ENCODE measurements at regions of chr18 and their contacts with region 1.

Region 1: DNA sequence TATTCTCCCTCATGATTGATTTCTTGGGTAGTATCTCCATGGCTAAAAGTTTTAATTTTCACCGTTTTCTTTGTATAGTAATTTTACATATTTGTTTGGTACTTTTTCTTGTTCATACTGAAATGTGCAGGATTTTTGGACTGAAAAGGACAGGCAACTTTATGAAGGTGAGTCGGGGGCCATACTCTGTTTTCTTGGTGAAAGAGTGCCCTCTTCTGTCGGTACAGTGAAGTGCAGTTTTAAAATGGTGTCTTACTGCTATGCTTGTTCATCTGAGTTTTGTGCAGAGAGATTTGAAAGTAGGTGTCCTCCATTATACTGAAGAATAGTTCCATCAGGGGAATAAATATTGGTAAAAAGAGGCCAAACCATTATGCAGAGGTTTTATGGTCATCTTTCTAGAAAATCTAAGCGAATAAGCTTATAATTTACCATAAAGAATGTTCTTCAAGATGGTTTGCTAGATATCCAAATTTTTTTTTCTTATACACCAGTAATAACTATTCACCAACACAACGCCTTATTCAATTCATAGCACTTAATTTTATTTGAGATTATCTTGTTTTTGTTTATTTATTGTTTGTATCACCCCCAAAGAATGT is 8.7 kb upstream of the SERPINB13 start:
- DNase-seq: no peak
- H3K4me3 ChIP-seq: no peak overlapping the region
- H3K27ac ChIP-seq: no peak overlapping the region
- H3K27me3 ChIP-seq: no peaks in the 10 kb centered on the region
- CTCF ChIP-seq: peak in 55 of 56 donors; percentile 30 to 79 (median 61)

Region 2: GRCh38 chr18:63518178-63519012 is 60.1 kb before region 1 on chr18:
- intact Hi-C with region 1: loop called in 1 of 2 experiments (anchors 5 kb)
- DNase-seq: peak in 7 of 10 donors; percentile 32 to 70 (median 46)
- H3K4me3 ChIP-seq: no peak overlapping the region
- H3K27ac ChIP-seq: no peak overlapping the region
- H3K27me3 ChIP-seq: peaks cover 0 to 13% (median 0%) of the 10 kb centered on the region in 45 donors
- CTCF ChIP-seq: peak; percentile 74 to 96 (median 86)